Activated CD8-positive, alpha-beta T cell treated with anti-CD3 and anti-CD28 coated beads, Interleukin-2, amount 10 ng/mL, durations not matched to agents 7 days and 5 days (primary cell): ENCODE measurements at regions of chr5 and their contacts with region 1.

Region 1: GRCh38 chr5:95664204-95664786 is 17.7 kb downstream of the RFESD start:
- DNase-seq: peak; percentile 59
- ATAC-seq: no peak
- H3K4me3 Mint-ChIP-seq: no peak overlapping the region
- H3K27ac Mint-ChIP-seq: no peak overlapping the region
- H3K4me1 Mint-ChIP-seq: no peaks in the 10 kb centered on the region
- H3K27me3 Mint-ChIP-seq: peaks cover 7% of the 10 kb centered on the region

Region 2: DNA sequence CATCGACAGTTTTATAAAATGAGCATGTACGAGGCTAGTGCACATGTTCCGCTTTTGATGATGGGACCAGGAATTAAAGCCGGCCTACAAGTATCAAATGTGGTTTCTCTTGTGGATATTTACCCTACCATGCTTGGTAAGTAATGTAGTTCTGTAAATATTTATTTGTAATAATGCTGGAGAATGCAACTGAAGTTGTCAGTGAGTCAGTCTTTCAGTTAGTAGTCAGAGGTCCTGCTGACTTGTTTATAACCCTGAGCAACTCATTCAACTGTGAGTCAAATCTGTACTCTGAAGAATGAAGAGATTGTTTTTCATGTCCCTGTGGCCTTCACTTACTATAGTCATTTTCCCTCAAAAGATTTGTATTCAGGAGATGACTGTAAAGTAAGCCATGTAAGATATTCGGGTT is 72.8 kb before region 1 on chr5:
- CTCF ChIA-PET with region 1: no interaction called
- POLR2A ChIA-PET with region 1: no interaction called
- DNase-seq: no peak
- ATAC-seq: no peak
- H3K4me3 Mint-ChIP-seq: no peak overlapping the region
- H3K27ac Mint-ChIP-seq: no peak overlapping the region
- H3K4me1 Mint-ChIP-seq: peaks cover 20% of the 10 kb centered on the region
- H3K27me3 Mint-ChIP-seq: no peaks in the 10 kb centered on the region

Region 3: GRCh38 chr5:95609711-95610110 is 54.6 kb before region 1 on chr5:
- CTCF ChIA-PET with region 1: no interaction called
- POLR2A ChIA-PET with region 1: no interaction called
- DNase-seq: no peak
- ATAC-seq: no peak
- H3K4me3 Mint-ChIP-seq: no peak overlapping the region
- H3K27ac Mint-ChIP-seq: no peak overlapping the region
- H3K4me1 Mint-ChIP-seq: no peaks in the 10 kb centered on the region
- H3K27me3 Mint-ChIP-seq: no peaks in the 10 kb centered on the region

Region 4: GRCh38 chr5:95641741-95642220 is 22.5 kb before region 1 on chr5:
- CTCF ChIA-PET with region 1: interaction called, 20 read pairs
- POLR2A ChIA-PET with region 1: no interaction called
- DNase-seq: no peak
- ATAC-seq: no peak
- H3K4me3 Mint-ChIP-seq: no peak overlapping the region
- H3K27ac Mint-ChIP-seq: no peak overlapping the region
- H3K4me1 Mint-ChIP-seq: peaks cover 30% of the 10 kb centered on the region
- H3K27me3 Mint-ChIP-seq: peaks cover 5% of the 10 kb centered on the region

Region 5: DNA sequence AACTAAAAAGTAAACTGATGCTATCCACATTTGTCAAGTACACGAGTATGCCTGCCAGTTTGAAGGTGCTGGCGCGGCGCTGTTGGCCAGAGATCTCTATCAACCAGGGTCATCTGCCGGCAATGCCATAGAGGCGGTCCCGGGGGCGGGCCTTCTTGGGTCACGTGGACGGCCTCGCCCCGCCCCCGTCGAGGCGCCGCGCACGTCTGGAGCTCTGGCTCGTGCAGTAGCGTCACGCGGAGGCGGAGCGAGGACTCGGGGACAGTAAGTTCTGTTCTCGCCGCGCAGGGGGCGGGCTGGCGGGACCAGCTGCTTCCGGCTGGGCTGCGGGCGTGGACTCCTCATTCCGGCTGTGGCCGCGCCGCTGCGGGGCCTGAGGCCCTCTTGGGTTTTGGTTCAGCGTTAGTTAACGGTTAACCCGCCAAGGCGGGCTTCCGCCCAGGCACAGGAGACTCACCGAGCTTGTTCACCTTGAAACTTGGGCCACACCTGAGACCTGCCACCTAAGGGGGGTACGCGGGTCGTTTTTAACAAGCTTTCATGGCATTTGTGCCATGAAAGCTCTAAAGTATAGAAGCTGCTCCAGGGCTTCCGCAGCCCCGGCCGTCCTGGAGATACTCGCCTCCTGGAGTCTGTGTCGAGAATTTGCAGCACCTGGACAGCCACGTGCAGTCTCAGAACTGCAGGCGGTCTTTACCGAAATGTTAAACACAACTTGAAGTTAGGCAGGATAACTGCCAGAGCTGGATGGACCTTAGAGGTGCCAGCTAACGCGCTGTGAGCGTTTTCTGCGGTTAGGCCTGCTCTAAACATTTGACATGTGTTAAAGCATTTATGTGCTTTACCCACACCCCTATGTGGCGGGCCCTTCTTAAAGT is 17.5 kb before region 1 on chr5 and contains the start of gene RFESD:
- CTCF ChIA-PET with region 1: interaction called, 20 read pairs
- POLR2A ChIA-PET with region 1: interaction called, 3 read pairs
- DNase-seq: peak; percentile 97
- ATAC-seq: peak; percentile 97
- H3K4me3 Mint-ChIP-seq: peak within 1 kb of the TSS; percentile 78
- H3K27ac Mint-ChIP-seq: peak within 1 kb of the TSS; percentile 88
- H3K4me1 Mint-ChIP-seq: peaks cover 36% of the 10 kb centered on the region
- H3K27me3 Mint-ChIP-seq: no peaks in the 10 kb centered on the region
- total RNA-seq, gene RFESD: 4.9 to 5.1 TPM

Region 6: GRCh38 chr5:95652849-95653248 is 11.4 kb before region 1 on chr5:
- CTCF ChIA-PET with region 1: interaction called, 20 read pairs
- POLR2A ChIA-PET with region 1: interaction called, 3 read pairs
- DNase-seq: no peak
- ATAC-seq: no peak
- H3K4me3 Mint-ChIP-seq: no peak overlapping the region
- H3K27ac Mint-ChIP-seq: no peak overlapping the region
- H3K4me1 Mint-ChIP-seq: peaks cover 4% of the 10 kb centered on the region
- H3K27me3 Mint-ChIP-seq: no peaks in the 10 kb centered on the region

Region 7: DNA sequence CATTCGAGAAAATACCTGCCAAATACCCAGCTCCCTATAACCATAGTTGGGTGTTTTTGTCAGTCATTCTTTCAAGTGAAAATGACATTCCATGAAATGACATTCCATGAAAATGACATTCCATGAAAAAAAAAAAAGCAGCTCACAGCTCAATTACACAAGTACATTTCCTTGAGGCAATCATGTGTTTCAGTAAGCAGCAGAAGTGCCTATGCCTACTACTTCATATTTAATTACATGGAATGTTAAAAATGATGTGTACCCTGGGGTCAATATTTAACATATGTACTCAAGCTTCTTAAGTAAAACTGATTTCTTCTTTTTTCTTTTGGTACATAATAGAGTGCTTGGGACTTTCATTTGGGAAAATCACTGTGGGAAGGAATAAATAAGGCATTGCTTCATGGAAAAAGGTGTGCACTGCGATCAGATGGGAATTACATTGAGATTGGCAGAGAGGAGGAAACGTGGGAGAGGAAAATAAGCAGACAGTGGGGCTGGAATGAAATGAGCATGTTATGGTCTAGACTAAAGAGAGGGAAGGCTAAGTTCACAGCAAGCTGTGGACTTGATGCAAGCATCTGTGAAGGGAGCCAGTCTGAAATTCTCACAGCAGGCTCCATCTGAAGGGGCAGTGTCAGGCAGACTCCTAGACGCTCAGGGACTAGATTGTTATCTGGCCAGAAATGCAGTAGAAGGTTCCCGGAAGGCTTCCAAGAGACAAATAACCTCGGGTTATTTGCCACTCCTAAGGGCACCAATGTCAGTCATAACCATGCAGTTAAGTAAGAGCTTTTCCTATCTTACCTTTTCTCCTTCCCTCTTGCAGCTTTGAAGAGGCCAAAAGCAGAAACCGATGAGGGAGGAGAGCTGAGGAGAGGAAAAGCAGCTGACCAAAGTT is 33.7 kb after region 1 on chr5:
- CTCF ChIA-PET with region 1: interaction called, 16 read pairs
- POLR2A ChIA-PET with region 1: no interaction called
- DNase-seq: no peak
- ATAC-seq: no peak
- H3K4me3 Mint-ChIP-seq: no peak overlapping the region
- H3K27ac Mint-ChIP-seq: no peak overlapping the region
- H3K4me1 Mint-ChIP-seq: no peaks in the 10 kb centered on the region
- H3K27me3 Mint-ChIP-seq: peaks cover 36% of the 10 kb centered on the region

Region 8: GRCh38 chr5:95773335-95774059 is 109.2 kb after region 1 on chr5:
- CTCF ChIA-PET with region 1: interaction called, 15 read pairs
- POLR2A ChIA-PET with region 1: no interaction called
- DNase-seq: no peak
- ATAC-seq: no peak
- H3K4me3 Mint-ChIP-seq: no peak overlapping the region
- H3K27ac Mint-ChIP-seq: no peak overlapping the region
- H3K4me1 Mint-ChIP-seq: peaks cover 2% of the 10 kb centered on the region
- H3K27me3 Mint-ChIP-seq: peaks cover 10% of the 10 kb centered on the region

Region 9: GRCh38 chr5:95853490-95853889 is 189.2 kb after region 1 on chr5:
- CTCF ChIA-PET with region 1: interaction called, 42 read pairs
- POLR2A ChIA-PET with region 1: no interaction called
- DNase-seq: no peak
- ATAC-seq: no peak
- H3K4me3 Mint-ChIP-seq: no peak overlapping the region
- H3K27ac Mint-ChIP-seq: no peak overlapping the region
- H3K4me1 Mint-ChIP-seq: peaks cover 8% of the 10 kb centered on the region
- H3K27me3 Mint-ChIP-seq: peaks cover 10% of the 10 kb centered on the region

Region 10: DNA sequence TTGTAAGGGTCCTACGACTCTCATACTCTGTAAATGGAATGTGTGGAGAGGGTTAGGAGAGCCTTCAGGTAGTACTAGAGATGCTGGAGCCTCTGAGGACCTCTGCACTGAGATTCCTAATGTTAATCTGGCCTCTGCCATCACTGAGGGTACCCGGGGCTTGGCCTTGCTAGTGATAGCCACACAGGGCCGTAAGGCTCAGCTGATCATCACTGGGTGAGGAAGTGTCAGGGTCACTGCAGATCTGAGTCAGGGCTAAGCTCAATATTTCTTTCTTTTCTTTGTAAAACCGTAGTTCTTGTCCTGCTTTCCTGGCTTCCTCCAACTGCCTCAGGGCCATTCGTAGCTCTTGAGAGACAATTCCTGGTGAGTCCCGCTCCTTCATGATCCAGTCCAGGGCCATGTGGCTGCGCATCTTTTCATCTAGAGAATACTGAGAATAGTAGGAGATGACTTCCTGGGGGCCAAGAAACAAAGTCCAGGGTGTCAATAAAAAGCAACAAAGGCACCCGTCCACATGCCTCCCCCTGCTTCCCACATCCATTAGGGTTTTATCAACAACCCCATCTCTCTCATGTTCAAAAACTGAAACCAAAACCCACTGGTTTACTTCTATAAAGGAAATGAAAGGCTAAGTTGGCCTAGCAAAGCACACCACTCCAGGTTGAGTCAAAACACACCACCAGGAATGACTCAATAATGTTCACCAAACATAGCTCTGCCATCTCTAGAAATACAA is 1430.5 kb after region 1 on chr5:
- CTCF ChIA-PET with region 1: no interaction called
- POLR2A ChIA-PET with region 1: no interaction called
- DNase-seq: peak; percentile 57
- ATAC-seq: peak; percentile 93
- H3K4me3 Mint-ChIP-seq: peak overlapping the region; percentile 29
- H3K27ac Mint-ChIP-seq: peak overlapping the region; percentile 68
- H3K4me1 Mint-ChIP-seq: peaks cover 21% of the 10 kb centered on the region
- H3K27me3 Mint-ChIP-seq: peaks cover 18% of the 10 kb centered on the region